GM12878 (cell line): ENCODE measurements at regions of chr10 and their contacts with region 1.

Region 1: GRCh38 chr10:85986777-85987176 is 379.8 kb downstream of the GRID1 start:
- DNase-seq: no peak
- ATAC-seq: no peak
- H3K4me3 ChIP-seq: no peak overlapping the region
- H3K27ac ChIP-seq: no peak overlapping the region
- H3K4me1 ChIP-seq: no peaks in the 10 kb centered on the region
- H3K27me3 ChIP-seq: no peaks in the 10 kb centered on the region; a peak in 1 of 4 replicates
- CTCF ChIP-seq: no peak
- EP300 ChIP-seq: no peak
- POLR2A ChIP-seq: no peak
- RAD21 ChIP-seq: no peak

Region 2: DNA sequence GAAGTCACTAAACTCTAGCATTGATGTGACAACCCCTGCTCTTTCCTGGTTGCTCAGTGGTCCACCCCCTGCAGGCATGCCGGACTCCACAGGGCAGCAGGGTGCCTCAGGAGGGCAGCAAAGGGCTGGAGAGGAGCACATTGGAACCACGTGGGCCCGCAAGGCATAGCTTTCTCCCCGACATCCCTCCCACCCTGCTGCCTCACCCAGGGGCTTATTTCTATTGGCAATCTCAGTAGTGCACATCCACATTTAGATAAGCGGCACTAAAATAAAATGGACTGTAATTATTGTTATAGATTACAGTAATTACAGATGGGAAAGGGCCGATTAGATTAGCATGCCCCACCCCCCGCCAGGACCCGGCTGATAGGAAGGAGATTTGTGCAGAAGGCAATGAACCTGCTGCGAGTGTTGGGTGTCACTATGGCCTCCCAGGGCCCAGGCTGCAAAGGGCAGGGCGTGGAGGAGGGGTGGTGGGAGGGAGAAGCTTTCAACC is 200.3 kb before region 1 on chr10:
- CTCF ChIA-PET with region 1: no interaction called
- POLR2A ChIA-PET with region 1: no interaction called
- RAD21 ChIA-PET with region 1: no interaction called
- SMC1A ChIA-PET with region 1: no interaction called
- in situ Hi-C with region 1: no loop called
- intact Hi-C with region 1: loop called (anchors 10 kb)
- DNase-seq: no peak
- ATAC-seq: peak; percentile 84
- H3K4me3 ChIP-seq: no peak overlapping the region
- H3K27ac ChIP-seq: no peak overlapping the region
- H3K4me1 ChIP-seq: no peaks in the 10 kb centered on the region
- H3K27me3 ChIP-seq: no peaks in the 10 kb centered on the region; a peak in 2 of 4 replicates
- CTCF ChIP-seq: peak; percentile 15 to 47 (median 42); a peak in 4 of 6 replicates
- EP300 ChIP-seq: no peak
- POLR2A ChIP-seq: no peak
- RAD21 ChIP-seq: peak; percentile 38; the same call in 1 of the 2 replicates

Region 3: DNA sequence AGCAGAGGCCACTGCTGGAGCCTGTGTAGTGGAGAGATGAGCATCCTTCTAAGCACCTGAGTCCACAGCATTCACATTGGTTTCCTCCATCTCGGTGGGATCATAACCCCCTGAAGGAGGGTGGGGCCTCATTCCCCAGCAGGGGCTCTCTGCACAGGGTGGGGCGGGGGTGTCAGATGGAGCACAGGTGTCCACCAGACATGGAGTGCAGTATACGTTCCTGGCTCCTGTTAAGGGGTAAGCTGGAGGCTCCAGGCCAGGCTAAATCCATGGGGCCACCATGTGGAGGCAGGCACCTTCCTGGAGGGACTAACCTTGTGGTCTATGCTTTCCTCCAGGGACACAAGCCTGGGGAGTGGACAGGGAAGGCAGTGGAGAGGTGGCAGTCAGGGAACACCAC is 127.2 kb after region 1 on chr10:
- CTCF ChIA-PET with region 1: no interaction called
- POLR2A ChIA-PET with region 1: no interaction called
- RAD21 ChIA-PET with region 1: no interaction called
- SMC1A ChIA-PET with region 1: no interaction called
- in situ Hi-C with region 1: no loop called
- intact Hi-C with region 1: no loop called
- DNase-seq: no peak
- ATAC-seq: no peak
- H3K4me3 ChIP-seq: no peak overlapping the region
- H3K27ac ChIP-seq: no peak overlapping the region
- H3K4me1 ChIP-seq: no peaks in the 10 kb centered on the region
- H3K27me3 ChIP-seq: peaks cover 0 to 5% of the 10 kb centered on the region in 2 experiments; a peak in 2 of 4 replicates
- CTCF ChIP-seq: no peak
- EP300 ChIP-seq: no peak
- POLR2A ChIP-seq: no peak
- RAD21 ChIP-seq: no peak